ENCODE measurements at regions of chr15 and their contacts with region 1.

Region 1: GRCh38 chr15:90902040-90902839 is 862 bp upstream of the MAN2A2 start:
- DNase-seq: peak; percentile 92
- CTCF ChIP-seq: peak; percentile 86

Region 2: GRCh38 chr15:90915808-90916440 is 13.7 kb after region 1 on chr15:
- CTCF ChIA-PET with region 1: interaction called, 45 read pairs
- POLR2A ChIA-PET with region 1: no interaction called
- DNase-seq: no peak
- CTCF ChIP-seq: no peak

Region 3: DNA sequence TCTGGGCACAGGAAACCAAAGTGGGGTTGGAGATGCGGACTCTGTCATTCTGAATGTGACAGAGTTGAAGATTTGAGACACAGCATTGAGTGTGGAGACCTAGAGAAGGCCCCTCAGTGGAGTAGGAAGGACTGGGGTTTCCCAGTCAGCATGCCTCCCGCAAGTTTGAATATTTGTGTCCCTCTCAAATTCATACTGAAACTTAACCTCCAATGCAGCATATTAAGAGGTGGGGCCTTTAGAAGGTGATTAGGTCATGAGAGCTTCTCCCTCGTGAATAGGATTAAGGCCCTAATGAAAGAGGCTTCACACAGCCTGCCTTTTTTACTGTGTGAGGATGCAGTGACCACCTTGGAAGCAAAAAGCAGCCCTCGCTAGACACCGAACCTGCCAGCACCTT is 22.1 kb after region 1 on chr15:
- CTCF ChIA-PET with region 1: interaction called, 211 read pairs
- POLR2A ChIA-PET with region 1: interaction called, 3 read pairs
- DNase-seq: peak; percentile 79
- CTCF ChIP-seq: no peak

Measured in GM10248 (cell line).